ENCODE measurements at regions of chr3 and their contacts with region 1.

Region 1: DNA sequence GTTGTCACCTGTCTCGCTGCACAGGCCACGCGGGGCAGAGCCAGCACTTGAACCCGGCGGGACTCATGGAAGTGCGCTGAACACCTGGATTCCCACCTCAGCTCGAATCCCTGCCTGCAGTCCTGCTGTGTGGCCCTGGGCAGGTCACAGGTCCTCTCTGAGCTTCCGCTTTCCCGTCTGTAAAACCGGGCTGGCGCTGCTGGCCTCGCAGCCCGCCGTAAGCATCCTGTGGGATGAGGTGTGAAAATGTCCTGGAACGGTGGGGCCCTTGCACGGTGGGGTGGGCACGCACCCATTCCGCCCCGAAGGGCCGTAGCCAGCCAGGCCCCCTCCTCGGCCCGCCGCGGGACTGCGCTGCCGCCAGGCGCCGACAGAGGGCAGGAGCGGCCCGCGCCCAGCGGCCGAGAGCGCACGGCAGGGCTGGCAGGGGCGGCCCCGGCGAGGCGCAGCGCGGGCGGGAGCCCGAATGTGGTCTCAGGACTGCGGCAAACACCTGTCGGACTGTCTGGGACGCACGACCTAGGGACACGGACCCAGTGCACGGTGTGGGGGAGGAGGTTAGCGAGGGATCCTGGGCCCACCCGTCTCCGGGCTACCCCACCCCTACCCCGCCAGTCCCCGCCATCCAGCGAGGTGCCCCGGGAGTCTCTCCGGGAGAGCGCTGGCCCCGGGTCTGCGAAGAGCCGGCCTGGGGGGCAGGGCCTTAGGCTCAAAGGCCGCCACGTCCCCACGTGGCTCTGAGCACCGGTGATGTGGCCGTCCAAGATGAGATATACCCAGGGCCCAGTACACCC is 40.4 kb downstream of the DNAJB8 start:
- DNase-seq: peak; percentile 40
- H3K4me3 ChIP-seq: peak overlapping the region; percentile 54
- H3K27ac ChIP-seq: no peak overlapping the region
- H3K4me1 ChIP-seq: peaks cover 14% of the 10 kb centered on the region
- H3K27me3 ChIP-seq: peaks cover 44% of the 10 kb centered on the region
- CTCF ChIP-seq: peak; percentile 98

Region 2: GRCh38 chr3:128152419-128153155 is 273.7 kb before region 1 on chr3:
- intact Hi-C with region 1: no loop called
- DNase-seq: no peak
- H3K4me3 ChIP-seq: peak overlapping the region; percentile 87
- H3K27ac ChIP-seq: peak overlapping the region; percentile 95
- H3K4me1 ChIP-seq: peaks cover 37% of the 10 kb centered on the region
- H3K27me3 ChIP-seq: no peaks in the 10 kb centered on the region
- CTCF ChIP-seq: no peak

Region 3: GRCh38 chr3:128497387-128498126 is 71.2 kb after region 1 on chr3:
- intact Hi-C with region 1: loop called (anchors 5 kb)
- DNase-seq: peak; percentile 65
- H3K4me3 ChIP-seq: peak overlapping the region; percentile 70
- H3K27ac ChIP-seq: peak overlapping the region; percentile 33
- H3K4me1 ChIP-seq: peaks cover 29% of the 10 kb centered on the region
- H3K27me3 ChIP-seq: peaks cover 98% of the 10 kb centered on the region
- CTCF ChIP-seq: peak; percentile 87

Region 4: GRCh38 chr3:128603811-128604775 is 177.8 kb after region 1 on chr3:
- intact Hi-C with region 1: loop called (anchors 10 kb)
- DNase-seq: no peak
- H3K4me3 ChIP-seq: no peak overlapping the region
- H3K27ac ChIP-seq: no peak overlapping the region
- H3K4me1 ChIP-seq: peaks cover 15% of the 10 kb centered on the region
- H3K27me3 ChIP-seq: no peaks in the 10 kb centered on the region
- CTCF ChIP-seq: no peak

Measured in left ventricle myocardium inferior (tissue), 1 donor.